ENCODE measurements at regions of chr16 and their contacts with region 1.

Region 1: GRCh38 chr16:57167953-57168352 is 17.9 kb downstream of the PSME3IP1 start:
- DNase-seq: peak; percentile 52 to 72 (median 65)
- H3K4me3 ChIP-seq: no peak overlapping the region
- H3K4me3 Mint-ChIP-seq: no peak overlapping the region
- H3K27ac ChIP-seq: no peak overlapping the region
- H3K27ac Mint-ChIP-seq: peak overlapping the region in 2 of 7 donors; percentile 26 to 32
- H3K4me1 ChIP-seq: peaks cover 5% of the 10 kb centered on the region
- H3K4me1 Mint-ChIP-seq: peaks cover 9 to 16% (median 11%) of the 10 kb centered on the region in 4 donors
- H3K27me3 ChIP-seq: no peaks in the 10 kb centered on the region
- H3K27me3 Mint-ChIP-seq: no peaks in the 10 kb centered on the region

Region 2: GRCh38 chr16:57128771-57129389 is 39.1 kb before region 1 on chr16:
- CTCF ChIA-PET with region 1: interaction called, 3 read pairs
- POLR2A ChIA-PET with region 1: no interaction called
- intact Hi-C with region 1: loop called (anchors 5 kb)
- DNase-seq: peak; percentile 28 to 70 (median 32)
- H3K4me3 ChIP-seq: no peak overlapping the region
- H3K4me3 Mint-ChIP-seq: peak overlapping the region in 7 of 8 donors; percentile 14 to 82 (median 66)
- H3K27ac ChIP-seq: peak overlapping the region; percentile 49
- H3K27ac Mint-ChIP-seq: peak overlapping the region; percentile 17 to 95 (median 79)
- H3K4me1 ChIP-seq: peaks cover 89% of the 10 kb centered on the region
- H3K4me1 Mint-ChIP-seq: peaks cover 49 to 97% (median 74%) of the 10 kb centered on the region in 4 donors
- H3K27me3 ChIP-seq: no peaks in the 10 kb centered on the region
- H3K27me3 Mint-ChIP-seq: no peaks in the 10 kb centered on the region

Region 3: DNA sequence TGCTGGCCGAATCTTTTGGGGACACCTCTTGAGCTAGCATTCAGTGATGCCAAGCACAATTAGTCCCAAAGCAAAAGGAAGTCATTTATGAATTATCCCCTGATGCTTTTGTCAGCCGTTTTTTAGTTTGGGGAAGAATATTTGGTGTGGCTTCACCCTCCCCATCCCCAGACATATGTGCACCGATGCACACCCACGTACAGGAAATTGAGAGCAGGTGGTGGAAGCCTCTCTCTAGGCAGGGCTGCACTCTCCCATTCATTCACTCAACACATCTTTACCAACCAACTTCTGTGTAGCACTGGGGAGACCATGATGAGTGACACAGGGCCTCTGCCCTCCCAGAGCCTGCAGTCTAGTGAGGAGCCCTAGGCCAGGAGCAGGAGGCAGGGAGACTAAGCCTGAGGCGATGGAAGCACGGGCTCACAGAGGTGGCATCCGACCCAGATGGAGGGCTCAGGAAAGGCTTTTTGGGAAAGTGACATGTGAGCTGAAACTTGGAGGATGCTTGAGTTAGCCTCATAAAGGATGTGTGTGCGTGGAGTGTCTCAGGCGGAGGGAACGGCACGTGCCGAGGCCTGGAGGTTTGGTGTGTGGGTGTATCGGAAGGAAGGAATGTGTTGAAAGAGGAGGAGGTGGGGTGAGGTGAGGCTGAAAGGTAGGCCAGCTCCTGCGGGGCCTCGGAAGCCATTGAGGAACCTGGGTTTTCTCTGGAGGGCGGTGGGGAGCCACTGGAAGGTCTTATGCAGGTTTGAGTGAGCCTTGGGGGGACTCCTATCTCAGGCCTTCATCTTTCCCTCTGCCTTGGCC is 25.9 kb before region 1 on chr16:
- CTCF ChIA-PET with region 1: interaction called, 3 read pairs
- POLR2A ChIA-PET with region 1: no interaction called
- intact Hi-C with region 1: loop called (anchors 2 kb)
- DNase-seq: peak in 4 of 5 donors; percentile 22 to 28 (median 23)
- H3K4me3 ChIP-seq: no peak overlapping the region
- H3K4me3 Mint-ChIP-seq: peak overlapping the region in 7 of 8 donors; percentile 62 to 85 (median 73)
- H3K27ac ChIP-seq: peak overlapping the region; percentile 4
- H3K27ac Mint-ChIP-seq: peak overlapping the region; percentile 78 to 96 (median 93)
- H3K4me1 ChIP-seq: peaks cover 42% of the 10 kb centered on the region
- H3K4me1 Mint-ChIP-seq: peaks cover 20 to 64% (median 46%) of the 10 kb centered on the region in 4 donors
- H3K27me3 ChIP-seq: no peaks in the 10 kb centered on the region
- H3K27me3 Mint-ChIP-seq: no peaks in the 10 kb centered on the region

Region 4: GRCh38 chr16:57204675-57205074 is 36.7 kb after region 1 on chr16:
- CTCF ChIA-PET with region 1: no interaction called
- POLR2A ChIA-PET with region 1: no interaction called
- intact Hi-C with region 1: no loop called
- DNase-seq: no peak
- H3K4me3 ChIP-seq: no peak overlapping the region
- H3K4me3 Mint-ChIP-seq: no peak overlapping the region
- H3K27ac ChIP-seq: no peak overlapping the region
- H3K27ac Mint-ChIP-seq: no peak overlapping the region
- H3K4me1 ChIP-seq: no peaks in the 10 kb centered on the region
- H3K4me1 Mint-ChIP-seq: peaks cover 0 to 7% (median 5%) of the 10 kb centered on the region in 4 donors
- H3K27me3 ChIP-seq: no peaks in the 10 kb centered on the region
- H3K27me3 Mint-ChIP-seq: no peaks in the 10 kb centered on the region

Region 5: GRCh38 chr16:57216968-57217367 is 49.0 kb after region 1 on chr16:
- CTCF ChIA-PET with region 1: no interaction called
- POLR2A ChIA-PET with region 1: no interaction called
- intact Hi-C with region 1: no loop called
- DNase-seq: no peak
- H3K4me3 ChIP-seq: no peak overlapping the region
- H3K4me3 Mint-ChIP-seq: peak overlapping the region in 1 of 8 donors; percentile 2
- H3K27ac ChIP-seq: no peak overlapping the region
- H3K27ac Mint-ChIP-seq: no peak overlapping the region
- H3K4me1 ChIP-seq: no peaks in the 10 kb centered on the region
- H3K4me1 Mint-ChIP-seq: peaks cover 0 to 3% (median 0%) of the 10 kb centered on the region in 4 donors
- H3K27me3 ChIP-seq: no peaks in the 10 kb centered on the region
- H3K27me3 Mint-ChIP-seq: no peaks in the 10 kb centered on the region

Measured in CD4-positive, alpha-beta memory T cell (primary cell).